ENCODE measurements at regions of chr7 and their contacts with region 1.

Region 1: DNA sequence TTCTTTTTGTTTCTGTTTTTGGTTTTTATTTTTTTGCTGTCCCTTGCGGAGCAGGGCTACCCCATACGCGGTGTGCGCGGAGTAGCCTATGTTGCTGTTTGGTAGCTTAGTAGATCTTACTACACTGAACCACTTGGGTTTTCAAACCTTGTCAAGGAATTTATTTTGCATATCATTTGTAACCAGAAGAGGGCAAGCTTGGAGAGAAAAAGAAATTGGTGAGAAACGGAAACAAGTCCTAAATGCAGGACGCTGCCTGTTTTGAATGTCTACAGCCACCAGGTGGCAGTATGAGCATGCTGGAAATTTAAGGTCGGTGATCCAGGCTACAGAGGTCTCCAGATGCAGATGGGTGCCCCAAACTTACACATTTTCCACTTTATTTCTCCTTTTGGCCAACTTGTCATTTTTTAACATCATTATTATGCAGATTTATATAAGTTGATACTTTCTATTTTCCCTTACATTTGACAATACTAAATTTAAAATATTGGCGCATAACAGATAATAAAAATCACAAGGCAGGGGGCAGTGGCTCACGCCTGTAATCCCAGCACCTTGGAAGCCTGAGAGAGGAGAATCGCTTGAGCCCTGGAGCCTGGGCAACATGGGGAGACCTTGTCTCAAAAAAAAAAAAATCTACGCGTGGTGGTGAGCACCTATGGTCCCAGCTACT is 15.3 kb upstream of the TRA2A start:
- DNase-seq: peak; percentile 79
- H3K4me3 ChIP-seq: no peak overlapping the region
- H3K27ac ChIP-seq: no peak overlapping the region
- H3K4me1 ChIP-seq: no peaks in the 10 kb centered on the region
- H3K27me3 ChIP-seq: no peaks in the 10 kb centered on the region
- CTCF ChIP-seq: peak; percentile 90 to 91

Region 2: DNA sequence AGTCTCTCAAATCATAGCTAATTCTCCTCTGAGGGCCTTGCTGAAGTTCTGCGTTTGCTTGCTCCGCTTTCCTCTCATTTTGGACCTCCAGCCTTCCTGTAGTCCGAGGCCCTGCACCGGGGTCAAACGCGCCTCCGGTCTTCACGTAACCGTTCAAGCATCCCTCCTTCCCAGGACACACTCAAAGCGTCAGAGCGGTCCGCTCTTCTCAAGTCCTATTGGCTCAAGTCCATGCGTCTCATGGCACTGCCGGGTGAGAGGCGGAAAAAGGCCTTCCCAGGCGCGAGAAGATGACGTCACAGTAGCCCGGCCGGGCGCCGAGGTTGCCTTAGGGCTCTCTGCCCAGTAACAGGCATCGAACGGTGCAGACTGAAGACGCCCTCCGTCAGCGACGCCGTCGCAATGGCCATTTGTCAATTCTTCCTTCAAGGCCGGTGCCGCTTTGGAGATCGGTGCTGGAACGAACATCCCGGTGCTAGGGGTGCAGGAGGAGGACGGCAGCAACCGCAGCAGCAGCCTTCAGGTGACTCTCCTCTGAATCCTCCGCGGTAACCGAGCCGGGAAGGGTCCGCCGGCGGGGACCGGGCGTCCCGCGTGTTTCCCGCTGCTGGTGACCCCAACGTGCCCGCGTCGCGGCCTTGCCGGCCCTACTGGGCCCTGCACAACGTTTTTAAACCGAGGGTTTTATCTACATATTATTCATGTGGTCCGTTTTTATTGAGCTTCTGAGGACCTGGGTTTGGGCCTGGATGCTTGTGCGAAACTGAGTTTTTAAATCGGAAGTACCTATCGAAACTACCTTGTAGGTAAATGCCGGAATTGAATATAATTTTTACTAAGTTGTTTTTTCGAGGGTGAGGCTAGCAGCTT is 365.1 kb before region 1 on chr7 and contains the start of gene NUP42:
- CTCF ChIA-PET with region 1: no interaction called
- dilution Hi-C with region 1: no loop called
- in situ Hi-C with region 1: no loop called
- intact Hi-C with region 1: loop called (anchors 2 kb)
- DNase-seq: peak; percentile 98
- H3K4me3 ChIP-seq: peak within 1 kb of the TSS; percentile 56 to 85 (median 85)
- H3K27ac ChIP-seq: peak within 1 kb of the TSS; percentile 95
- H3K4me1 ChIP-seq: peaks cover 12% of the 10 kb centered on the region
- H3K27me3 ChIP-seq: no peaks in the 10 kb centered on the region
- CTCF ChIP-seq: no peak
- total RNA-seq, gene NUP42: 29.0 to 36.0 TPM

Region 3: GRCh38 chr7:23357190-23358093 is 189.6 kb before region 1 on chr7:
- CTCF ChIA-PET with region 1: interaction called, 6 read pairs
- dilution Hi-C with region 1: no loop called
- in situ Hi-C with region 1: no loop called
- intact Hi-C with region 1: loop called (anchors 1 kb)
- DNase-seq: peak; percentile 81
- H3K4me3 ChIP-seq: peak overlapping the region in 1 of 3 experiments; percentile 15
- H3K27ac ChIP-seq: peak overlapping the region; percentile 15
- H3K4me1 ChIP-seq: peaks cover 22% of the 10 kb centered on the region
- H3K27me3 ChIP-seq: no peaks in the 10 kb centered on the region
- CTCF ChIP-seq: peak; percentile 28 to 40

Region 4: GRCh38 chr7:23462846-23463245 is 84.2 kb before region 1 on chr7:
- CTCF ChIA-PET with region 1: interaction called, 3 read pairs
- dilution Hi-C with region 1: no loop called
- in situ Hi-C with region 1: no loop called
- intact Hi-C with region 1: loop called (anchors 1 kb)
- DNase-seq: no peak
- H3K4me3 ChIP-seq: no peak overlapping the region
- H3K27ac ChIP-seq: no peak overlapping the region
- H3K4me1 ChIP-seq: no peaks in the 10 kb centered on the region
- H3K27me3 ChIP-seq: peaks cover 9% of the 10 kb centered on the region
- CTCF ChIP-seq: peak; percentile 2 to 54

Region 5: DNA sequence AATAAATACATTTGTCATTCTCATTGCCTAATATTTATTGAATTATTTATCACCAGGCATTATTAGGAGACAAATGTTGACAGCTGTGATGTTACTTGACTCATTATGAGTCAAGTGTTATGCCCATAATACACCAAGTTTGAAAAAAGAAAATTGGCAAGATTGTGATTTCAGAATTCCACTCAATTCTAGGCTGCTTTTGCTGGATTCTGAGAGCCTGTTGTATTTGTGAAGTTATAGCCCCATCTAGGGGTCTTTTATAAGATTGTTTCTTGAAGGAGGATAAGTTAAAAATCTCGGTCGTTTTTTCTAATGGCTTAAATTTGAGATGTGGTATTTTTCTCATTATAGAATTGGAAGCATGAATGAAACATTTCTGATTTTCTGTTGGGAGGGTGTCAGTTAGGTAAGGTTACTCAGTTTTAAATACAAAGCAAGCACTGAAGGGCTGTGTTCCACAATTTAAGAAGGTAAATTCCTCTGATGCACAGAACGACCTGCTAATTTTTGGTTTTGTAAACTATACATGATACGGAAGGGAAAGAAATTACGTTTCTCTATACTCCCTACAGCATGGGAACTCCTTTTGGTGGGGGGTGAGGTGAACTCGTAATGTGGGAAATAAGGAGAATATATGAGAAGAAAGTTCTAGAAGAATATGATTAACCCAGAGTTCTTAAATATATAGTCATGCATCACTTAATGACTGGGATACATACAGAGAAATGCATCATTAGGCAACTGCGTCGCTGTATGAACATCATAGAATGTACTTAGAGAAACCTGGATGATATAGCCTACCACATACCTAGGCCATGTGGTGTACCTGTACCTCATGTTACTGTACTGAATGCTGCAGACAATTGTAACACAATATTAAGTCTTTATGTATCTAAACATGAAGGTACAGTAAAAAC is 165.6 kb after region 1 on chr7:
- CTCF ChIA-PET with region 1: interaction called, 8 read pairs
- dilution Hi-C with region 1: no loop called
- in situ Hi-C with region 1: no loop called
- intact Hi-C with region 1: loop called (anchors 1 kb)
- DNase-seq: peak; percentile 60
- H3K4me3 ChIP-seq: no peak overlapping the region
- H3K27ac ChIP-seq: no peak overlapping the region
- H3K4me1 ChIP-seq: peaks cover 20% of the 10 kb centered on the region
- H3K27me3 ChIP-seq: no peaks in the 10 kb centered on the region
- CTCF ChIP-seq: peak; percentile 35 to 46

Measured in mammary epithelial cell (primary cell).